ENCODE measurements at regions of chr12 and their contacts with region 1.

Region 1: DNA sequence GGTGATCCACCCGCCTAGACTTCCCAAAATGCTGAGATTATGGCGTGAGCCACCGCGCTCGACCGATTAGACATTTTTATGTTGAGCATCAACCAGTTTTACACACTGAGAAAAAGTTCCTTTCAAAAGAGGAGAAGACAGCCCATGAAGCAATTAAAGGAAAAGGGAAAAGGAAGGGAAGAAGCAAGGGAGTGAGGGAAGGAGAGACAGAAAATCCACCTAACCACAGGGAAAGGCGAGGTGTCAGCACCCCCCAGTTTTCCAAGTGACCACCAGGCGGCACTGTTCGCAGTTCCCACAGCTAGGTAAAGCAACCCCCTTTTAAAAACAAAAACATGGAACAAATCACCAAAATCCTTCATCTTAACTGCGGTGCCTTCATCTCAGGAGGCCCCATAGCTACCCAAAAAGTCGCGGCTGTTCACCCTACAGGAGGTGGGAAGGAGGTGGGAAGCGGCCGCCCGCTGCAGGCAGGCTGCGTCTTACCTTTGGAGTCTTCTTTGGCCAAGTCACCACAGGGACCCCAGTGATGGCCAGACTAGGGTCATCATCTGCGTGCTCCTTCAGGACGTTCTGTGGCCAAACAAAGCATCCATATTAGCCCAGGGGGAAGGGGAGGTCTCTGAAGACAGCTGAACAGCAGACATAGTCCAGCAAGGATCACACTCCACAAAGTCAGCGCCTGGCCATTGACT is 86.6 kb downstream of the KDM2B start:
- DNase-seq: peak in 2 of 4 donors; percentile 26 to 83
- ATAC-seq: peak; percentile 71
- H3K4me3 ChIP-seq: no peak overlapping the region
- H3K27ac ChIP-seq: no peak overlapping the region
- H3K4me1 ChIP-seq: peaks cover 0 to 14% of the 10 kb centered on the region in 2 donors
- H3K27me3 ChIP-seq: no peaks in the 10 kb centered on the region
- CTCF ChIP-seq: peak; percentile 73 to 90

Region 2: DNA sequence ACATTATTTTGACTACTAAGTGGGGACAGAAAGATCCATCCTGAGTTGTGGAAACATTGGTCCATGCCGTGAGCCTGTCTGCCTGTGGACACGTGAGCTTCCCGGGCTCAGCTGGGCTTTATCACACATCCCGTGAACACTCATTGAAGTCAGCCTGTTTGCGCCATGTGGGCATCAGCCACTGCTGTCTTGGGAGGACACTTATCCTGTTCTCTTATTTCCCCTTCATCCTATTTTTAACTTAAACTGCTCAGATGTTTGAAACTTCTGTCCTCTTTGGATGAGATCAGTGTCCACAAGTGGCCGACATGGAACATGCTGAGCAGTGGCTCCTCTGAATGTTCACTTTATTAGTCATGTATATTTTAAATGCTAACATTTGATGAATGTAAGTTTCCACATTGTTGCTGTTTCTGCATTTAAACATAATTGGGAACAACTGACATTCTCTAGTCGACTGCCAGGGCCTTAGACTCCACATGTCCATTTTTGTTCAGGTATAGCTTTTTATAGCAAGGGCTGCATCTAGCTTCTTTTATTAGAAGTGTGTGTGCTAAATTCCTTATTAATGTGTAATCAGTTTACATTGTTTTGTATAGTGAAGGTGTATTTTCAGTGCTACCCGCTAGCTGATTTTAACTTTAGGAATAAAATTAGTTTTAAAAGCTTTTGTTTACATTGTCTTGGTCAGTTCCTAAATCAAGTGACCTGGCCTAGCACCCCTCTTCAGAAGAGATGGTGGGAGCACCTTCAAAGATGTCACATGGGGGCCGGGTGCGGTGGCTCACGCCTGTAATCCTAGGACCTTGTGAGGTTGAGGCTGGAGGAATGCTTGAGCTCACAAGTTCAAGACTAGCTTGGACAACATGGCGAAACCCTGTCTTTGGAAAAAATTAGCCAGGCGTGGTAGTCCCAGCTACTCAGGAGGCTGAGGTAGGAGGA is 70.3 kb before region 1 on chr12:
- intact Hi-C with region 1: no loop called
- DNase-seq: no peak
- ATAC-seq: no peak
- H3K4me3 ChIP-seq: no peak overlapping the region
- H3K27ac ChIP-seq: peak overlapping the region in 1 of 2 donors; percentile 11
- H3K4me1 ChIP-seq: peaks cover 0 to 29% of the 10 kb centered on the region in 2 donors
- H3K27me3 ChIP-seq: no peaks in the 10 kb centered on the region
- CTCF ChIP-seq: no peak

Region 3: DNA sequence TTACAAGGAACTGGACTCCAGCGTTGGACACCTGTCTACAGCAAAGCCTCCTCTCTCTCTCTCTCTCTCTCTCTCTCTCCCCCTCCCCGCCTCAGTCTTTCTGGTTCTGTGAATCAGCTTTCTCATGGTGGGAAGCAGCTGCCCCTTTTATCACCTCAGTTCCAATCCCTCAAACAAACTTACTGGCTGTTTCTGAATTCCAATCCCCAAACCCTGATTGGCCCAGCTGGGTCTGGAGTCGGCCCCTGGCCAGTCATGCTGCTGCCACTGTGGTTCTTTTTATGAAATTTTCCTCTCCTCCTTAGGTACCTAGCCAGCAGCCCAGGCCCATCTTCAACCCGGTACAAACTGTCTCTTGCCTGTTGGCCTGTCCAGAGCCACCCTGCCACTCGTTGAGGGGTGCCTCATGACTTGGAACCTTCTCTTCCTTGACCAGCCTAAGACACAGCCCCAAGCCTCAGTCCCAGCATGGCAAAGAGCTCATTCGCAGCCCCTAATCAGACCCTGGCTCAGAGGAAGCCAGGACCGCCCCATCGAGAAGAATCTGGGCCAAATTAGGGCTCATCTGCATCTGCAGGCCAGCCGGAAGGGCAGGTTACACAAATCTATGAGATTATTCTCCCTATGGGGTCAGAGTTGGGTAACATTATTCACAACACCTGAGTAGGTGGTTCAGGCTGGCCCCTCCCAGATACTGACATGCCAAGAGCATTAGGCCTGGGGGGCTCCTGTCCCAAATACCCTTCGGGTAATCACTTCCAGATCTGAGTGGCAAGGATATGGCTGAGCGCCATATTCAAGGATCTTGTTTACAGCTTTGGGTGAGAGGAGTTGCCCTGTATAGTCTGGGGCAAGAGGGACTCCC is 184.7 kb after region 1 on chr12:
- intact Hi-C with region 1: loop called (anchors 5 to 10 kb)
- DNase-seq: no peak
- ATAC-seq: no peak
- H3K4me3 ChIP-seq: no peak overlapping the region
- H3K27ac ChIP-seq: no peak overlapping the region
- H3K4me1 ChIP-seq: peaks cover 0 to 10% of the 10 kb centered on the region in 2 donors
- H3K27me3 ChIP-seq: no peaks in the 10 kb centered on the region
- CTCF ChIP-seq: no peak